AG04449 (cell line): ENCODE measurements at regions of chr1 and their contacts with region 1.

Region 1: DNA sequence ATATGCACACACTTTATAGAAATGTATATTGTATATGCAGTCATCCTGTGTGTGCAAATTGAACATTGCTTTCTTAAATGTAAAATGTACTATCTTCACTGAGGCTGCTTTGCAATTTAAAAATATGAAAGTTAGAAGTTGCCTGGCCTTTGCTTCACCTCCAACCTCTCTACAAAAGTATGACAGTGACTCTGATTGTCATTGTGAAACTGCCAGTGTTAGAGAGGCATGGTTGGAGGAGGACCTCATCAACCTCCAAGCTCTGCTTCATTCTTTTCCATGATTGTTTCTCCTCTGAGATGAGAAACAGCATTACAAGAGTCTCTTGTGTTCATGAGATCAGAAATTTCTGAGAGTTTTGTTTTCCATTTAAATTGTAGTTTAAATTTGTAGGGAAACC is 185.5 kb downstream of the ZC3H11B start:
- DNase-seq: no peak
- H3K4me3 ChIP-seq: no peak overlapping the region
- CTCF ChIP-seq: no peak

Region 2: DNA sequence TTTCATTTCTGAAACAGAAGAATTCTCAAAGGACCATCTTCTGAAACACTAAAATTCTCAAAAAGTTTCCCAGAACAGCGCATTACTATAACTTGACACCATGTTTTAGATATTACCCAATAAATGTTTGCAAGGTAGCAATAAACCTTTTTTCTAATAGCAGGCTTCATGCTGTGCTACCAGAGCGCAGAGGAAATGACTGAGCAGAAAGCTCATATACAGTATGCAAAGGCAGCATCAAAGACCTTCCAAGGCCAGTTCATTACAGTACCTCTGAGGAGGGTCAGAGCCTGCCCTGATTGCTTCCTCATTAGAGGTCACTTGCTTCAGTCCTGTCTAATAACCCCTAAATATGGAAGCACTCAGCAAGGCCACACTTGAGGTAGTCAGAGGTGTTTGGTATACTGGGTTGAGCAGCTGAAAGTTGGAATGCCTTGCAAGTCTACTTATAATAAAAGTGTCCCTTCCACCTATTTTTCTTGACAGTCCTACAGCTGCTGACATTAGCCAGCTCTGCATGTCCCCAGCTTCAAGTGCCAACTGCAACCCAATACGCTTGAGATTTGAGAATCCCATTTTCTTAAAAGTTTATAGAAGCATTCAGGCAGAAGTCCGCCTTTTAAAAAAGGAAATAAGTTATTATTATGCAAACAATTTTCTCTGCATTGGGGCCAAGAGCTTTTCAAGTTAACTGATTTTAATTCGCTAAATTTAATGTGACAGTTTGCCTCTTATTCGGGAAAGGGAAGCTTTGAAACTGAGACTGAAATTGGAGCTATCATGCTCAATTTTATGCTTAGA is 21.7 kb before region 1 on chr1:
- CTCF ChIA-PET with region 1: no interaction called
- POLR2A ChIA-PET with region 1: no interaction called
- DNase-seq: no peak
- H3K4me3 ChIP-seq: no peak overlapping the region
- CTCF ChIP-seq: no peak

Region 3: DNA sequence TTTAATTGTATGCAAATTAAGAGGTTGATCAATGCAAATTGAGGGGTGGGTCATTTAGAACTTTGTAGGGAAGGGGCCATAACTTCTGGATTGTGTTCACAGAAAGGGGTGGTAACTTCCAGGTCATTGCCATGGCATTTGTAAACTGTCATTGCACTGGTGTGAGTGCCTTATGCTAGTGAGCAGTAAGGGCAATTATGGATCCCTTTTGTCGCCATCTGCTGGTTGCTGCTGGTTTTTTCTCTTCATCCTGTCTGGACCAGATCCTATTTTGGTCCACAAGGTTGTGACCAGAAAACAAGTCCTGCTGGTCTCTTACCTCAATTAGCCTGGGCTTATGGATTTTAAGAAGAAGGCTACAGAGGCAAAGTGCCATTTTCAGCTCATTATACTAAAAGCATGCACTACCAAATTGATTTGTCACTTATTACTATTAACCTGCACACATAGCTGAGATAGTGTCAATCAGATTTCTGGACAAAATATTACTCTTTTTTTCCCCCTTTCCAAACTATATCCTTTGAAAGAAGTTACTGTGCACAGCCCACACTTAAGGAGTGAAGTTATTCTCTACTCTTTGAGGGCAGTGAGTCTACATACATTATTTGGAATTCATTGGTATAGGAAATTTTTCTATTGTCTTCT is 10.7 kb before region 1 on chr1:
- CTCF ChIA-PET with region 1: interaction called, 20 read pairs
- POLR2A ChIA-PET with region 1: no interaction called
- DNase-seq: no peak
- H3K4me3 ChIP-seq: no peak overlapping the region
- CTCF ChIP-seq: peak; percentile 62